Right lobe of liver (tissue), 6 donors: ENCODE measurements at regions of chr4 and their contacts with region 1.

Region 1: GRCh38 chr4:102420569-102421221 is 75.4 kb upstream of the SLC39A8 start:
- DNase-seq: no peak
- ATAC-seq: peak; percentile 83 to 93 (median 90)
- H3K4me3 ChIP-seq: no peak overlapping the region
- H3K27ac ChIP-seq: no peak overlapping the region
- H3K4me1 ChIP-seq: peaks cover 0 to 10% (median 3%) of the 10 kb centered on the region in 4 donors
- H3K27me3 ChIP-seq: no peaks in the 10 kb centered on the region
- CTCF ChIP-seq: peak; percentile 28 to 43 (median 41)
- POLR2A ChIP-seq: no peak

Region 2: GRCh38 chr4:102344954-102345794 is 75.5 kb before region 1 on chr4 and contains the start of gene SLC39A8:
- intact Hi-C with region 1: loop called in 1 of 2 experiments (anchors 10 kb)
- DNase-seq: peak; percentile 92 to 95 (median 94)
- ATAC-seq: peak; percentile 91 to 95 (median 92)
- H3K4me3 ChIP-seq: peak within 1 kb of the TSS; percentile 55 to 74 (median 59)
- H3K27ac ChIP-seq: peak within 1 kb of the TSS; percentile 86 to 91 (median 89)
- H3K4me1 ChIP-seq: peaks cover 0 to 6% (median 0%) of the 10 kb centered on the region in 4 donors
- H3K27me3 ChIP-seq: no peaks in the 10 kb centered on the region
- CTCF ChIP-seq: peak; percentile 81 to 91 (median 86)
- POLR2A ChIP-seq: peak; percentile 86
- total RNA-seq, gene SLC39A8: 19.4 to 24.7 (median 23.3) TPM